ENCODE measurements at regions of chr5 and their contacts with region 1.

Region 1: GRCh38 chr5:128869970-128870369 is 95.3 kb upstream of the SLC27A6 start:
- DNase-seq: no peak
- H3K4me3 ChIP-seq: no peak overlapping the region
- H3K27ac ChIP-seq: no peak overlapping the region
- H3K4me1 ChIP-seq: no peaks in the 10 kb centered on the region
- H3K27me3 ChIP-seq: peaks cover 0 to 4% of the 10 kb centered on the region in 2 experiments
- CTCF ChIP-seq: no peak
- POLR2A ChIP-seq: no peak

Region 2: GRCh38 chr5:127925916-127926315 is 944.1 kb before region 1 on chr5:
- CTCF ChIA-PET with region 1: no interaction called
- POLR2A ChIA-PET with region 1: no interaction called
- dilution Hi-C with region 1: no loop called
- intact Hi-C with region 1: loop called (anchors 5 kb)
- DNase-seq: no peak
- H3K4me3 ChIP-seq: no peak overlapping the region
- H3K27ac ChIP-seq: no peak overlapping the region
- H3K4me1 ChIP-seq: peaks cover 11% of the 10 kb centered on the region
- H3K27me3 ChIP-seq: no peaks in the 10 kb centered on the region
- CTCF ChIP-seq: no peak
- POLR2A ChIP-seq: no peak

Region 3: GRCh38 chr5:128579088-128579487 is 290.9 kb before region 1 on chr5:
- CTCF ChIA-PET with region 1: no interaction called
- POLR2A ChIA-PET with region 1: no interaction called
- dilution Hi-C with region 1: no loop called
- intact Hi-C with region 1: no loop called
- DNase-seq: peak; percentile 25
- H3K4me3 ChIP-seq: no peak overlapping the region
- H3K27ac ChIP-seq: no peak overlapping the region
- H3K4me1 ChIP-seq: no peaks in the 10 kb centered on the region
- H3K27me3 ChIP-seq: no peaks in the 10 kb centered on the region
- CTCF ChIP-seq: no peak
- POLR2A ChIP-seq: no peak